ENCODE measurements at regions of chr4 and their contacts with region 1.

Region 1: DNA sequence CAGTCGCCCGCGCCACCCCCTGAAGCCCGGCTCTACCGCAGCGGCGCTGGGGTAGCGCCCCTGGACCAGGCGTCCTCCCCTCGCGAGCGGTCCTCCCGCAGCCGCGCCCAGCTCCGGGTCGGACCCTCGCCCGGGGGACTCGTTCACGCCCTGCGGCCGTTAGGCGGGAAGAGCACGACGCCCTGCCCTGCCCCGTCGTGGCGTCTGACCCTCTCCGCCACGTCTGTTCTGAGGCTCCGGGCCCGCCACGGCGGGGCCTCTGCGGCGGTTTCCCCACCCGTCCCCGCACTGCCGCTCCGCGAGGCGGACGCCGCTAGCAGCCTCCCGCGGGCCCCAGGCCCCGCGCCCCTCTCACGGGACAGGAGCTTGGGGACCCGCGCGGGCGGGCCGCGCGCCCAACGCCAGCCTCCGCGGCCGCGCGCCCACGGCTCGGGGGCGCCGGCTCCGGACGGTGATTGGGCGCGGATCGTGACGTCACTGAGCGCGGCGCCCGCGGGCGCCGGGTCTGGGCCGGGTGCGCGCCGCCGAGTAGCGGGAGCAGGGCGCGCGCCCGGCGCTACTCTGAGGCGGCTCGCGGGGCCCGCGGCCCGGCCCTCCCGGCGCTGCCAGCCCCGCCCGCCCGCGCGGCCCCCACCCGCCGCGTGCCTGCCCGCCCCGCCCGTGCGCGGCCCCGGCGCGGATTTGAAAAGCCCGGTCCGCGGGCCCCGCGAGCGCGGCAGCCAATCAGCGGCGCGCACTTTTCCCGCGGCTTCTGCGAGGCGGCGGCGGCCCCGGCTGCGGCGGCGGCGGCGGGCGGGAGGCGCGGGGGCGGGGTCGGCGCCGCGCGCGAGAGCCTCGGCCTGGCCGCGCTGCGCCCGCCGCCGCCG is at the start of gene NSD2:
- DNase-seq: peak; percentile 96
- ATAC-seq: peak; percentile 60
- H3K4me3 Mint-ChIP-seq: peak within 1 kb of the TSS; percentile 99
- H3K27ac Mint-ChIP-seq: peak within 1 kb of the TSS; percentile 99
- H3K4me1 Mint-ChIP-seq: peaks cover 36% of the 10 kb centered on the region
- H3K27me3 Mint-ChIP-seq: no peaks in the 10 kb centered on the region
- total RNA-seq, gene NSD2: 194 to 232 TPM

Region 2: GRCh38 chr4:931960-932712 is 938.7 kb before region 1 on chr4 and contains the starts of genes GAK and TMEM175:
- CTCF ChIA-PET with region 1: no interaction called
- POLR2A ChIA-PET with region 1: no interaction called
- intact Hi-C with region 1: loop called in 1 of 2 experiments (anchors 1 kb)
- DNase-seq: peak; percentile 98
- ATAC-seq: peak; percentile 95
- H3K4me3 Mint-ChIP-seq: peak within 1 kb of the TSS; percentile 87
- H3K27ac Mint-ChIP-seq: peak within 1 kb of the TSS; percentile 89
- H3K4me1 Mint-ChIP-seq: peaks cover 29% of the 10 kb centered on the region
- H3K27me3 Mint-ChIP-seq: no peaks in the 10 kb centered on the region
- total RNA-seq, gene GAK: 82.9 to 88.0 TPM
- total RNA-seq, gene TMEM175: 15.2 to 17.3 TPM

Region 3: DNA sequence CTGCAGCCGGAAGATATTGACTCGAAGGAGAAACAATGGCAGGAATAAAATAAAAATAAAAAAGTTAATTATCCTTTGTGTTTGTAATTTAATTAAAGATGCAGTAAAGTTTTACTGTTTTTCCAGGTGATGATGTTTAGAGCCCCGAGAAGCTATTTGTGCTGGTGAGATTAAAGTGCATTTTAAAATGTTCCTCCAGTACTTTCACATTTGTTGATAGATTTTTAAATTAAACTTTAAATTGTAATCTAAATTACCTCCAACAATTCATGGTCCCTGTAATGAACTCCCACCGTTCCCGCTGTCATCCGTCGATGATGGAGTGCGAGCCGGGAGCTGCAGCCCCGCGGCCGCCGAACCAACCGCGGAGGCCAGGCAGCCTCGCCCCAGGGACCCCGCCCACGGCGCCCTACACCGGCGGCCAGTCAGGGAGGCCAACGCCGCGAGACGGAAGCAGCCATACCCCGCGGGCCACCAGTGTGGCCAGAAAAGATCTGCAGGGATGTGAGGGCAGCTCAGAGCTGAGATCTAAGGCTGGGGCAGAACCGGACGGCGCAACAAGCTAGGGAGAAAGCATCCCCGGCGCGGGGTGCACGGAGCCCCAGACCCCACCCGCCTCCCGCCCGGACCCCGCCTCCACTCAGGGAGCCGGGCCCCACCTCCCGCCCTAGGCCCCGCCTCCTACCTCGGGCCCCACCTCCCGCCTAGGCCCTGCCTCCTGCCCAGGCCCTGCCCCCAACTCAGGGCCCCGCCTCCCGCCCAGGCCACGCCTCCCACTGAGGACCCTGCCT is 290.7 kb before region 1 on chr4:
- CTCF ChIA-PET with region 1: no interaction called
- POLR2A ChIA-PET with region 1: no interaction called
- intact Hi-C with region 1: loop called in 1 of 2 experiments (anchors 2 kb)
- DNase-seq: peak; percentile 98
- ATAC-seq: peak; percentile 79
- H3K4me3 Mint-ChIP-seq: peak overlapping the region; percentile 60
- H3K27ac Mint-ChIP-seq: no peak overlapping the region
- H3K4me1 Mint-ChIP-seq: peaks cover 4% of the 10 kb centered on the region
- H3K27me3 Mint-ChIP-seq: no peaks in the 10 kb centered on the region

Region 4: GRCh38 chr4:1834047-1834775 is 36.6 kb before region 1 on chr4:
- CTCF ChIA-PET with region 1: no interaction called
- POLR2A ChIA-PET with region 1: no interaction called
- intact Hi-C with region 1: no loop called
- DNase-seq: no peak
- ATAC-seq: no peak
- H3K4me3 Mint-ChIP-seq: no peak overlapping the region
- H3K27ac Mint-ChIP-seq: no peak overlapping the region
- H3K4me1 Mint-ChIP-seq: peaks cover 5% of the 10 kb centered on the region
- H3K27me3 Mint-ChIP-seq: no peaks in the 10 kb centered on the region

Region 5: GRCh38 chr4:1856042-1856788 is 14.6 kb before region 1 on chr4 and contains the start of gene LETM1:
- CTCF ChIA-PET with region 1: interaction called, 3 read pairs
- POLR2A ChIA-PET with region 1: interaction called, 11 read pairs
- intact Hi-C with region 1: loop called (anchors 1 kb)
- DNase-seq: peak; percentile 97
- ATAC-seq: peak; percentile 99
- H3K4me3 Mint-ChIP-seq: peak within 1 kb of the TSS; percentile 78
- H3K27ac Mint-ChIP-seq: peak within 1 kb of the TSS; percentile 55
- H3K4me1 Mint-ChIP-seq: peaks cover 40% of the 10 kb centered on the region
- H3K27me3 Mint-ChIP-seq: no peaks in the 10 kb centered on the region
- total RNA-seq, gene LETM1: 41.6 to 51.3 TPM

Region 6: DNA sequence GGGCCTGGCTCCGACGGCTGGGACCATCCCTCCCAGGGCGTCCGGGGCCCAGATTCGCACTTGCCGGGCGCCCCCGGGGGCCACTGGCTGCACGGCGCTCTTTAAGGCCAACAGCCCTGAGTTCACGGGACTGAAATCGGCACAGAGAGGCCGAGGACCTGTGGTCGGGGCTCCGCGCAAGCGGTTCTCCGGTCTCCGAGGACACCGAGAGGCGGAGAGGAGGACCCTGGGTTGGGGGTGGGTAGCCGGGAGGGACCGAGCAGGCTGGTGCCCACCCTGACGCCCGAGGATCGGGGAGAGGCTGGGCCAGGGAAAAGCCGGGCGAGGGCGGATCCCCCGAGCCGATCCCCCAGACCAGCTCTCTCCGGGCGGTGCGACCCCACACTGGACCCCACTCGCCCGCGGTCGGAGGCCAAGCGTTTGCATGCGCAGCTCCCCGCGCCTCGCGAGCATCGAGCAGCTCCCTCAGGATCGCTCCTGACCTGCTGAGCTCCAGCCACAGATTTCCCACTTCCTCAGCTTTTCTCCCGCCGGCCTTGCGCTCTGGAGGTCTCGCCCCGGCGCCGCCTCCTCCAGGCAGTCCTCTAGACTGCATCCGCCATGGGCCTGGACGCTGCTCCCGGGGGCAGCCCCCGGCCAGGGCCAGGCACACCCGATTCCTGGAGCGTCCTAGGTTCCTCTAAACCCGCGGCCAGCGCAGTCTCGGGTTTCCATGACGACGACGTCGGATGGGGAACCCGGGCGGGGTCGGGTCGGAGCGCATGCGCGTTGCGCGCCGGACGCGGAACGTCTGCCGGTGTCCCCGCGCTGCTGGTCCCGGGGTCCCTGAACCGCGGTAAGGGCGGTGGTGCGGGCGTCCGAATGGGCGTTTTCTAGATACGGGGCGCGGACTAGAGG is 170.7 kb after region 1 on chr4:
- CTCF ChIA-PET with region 1: no interaction called
- POLR2A ChIA-PET with region 1: no interaction called
- intact Hi-C with region 1: loop called in 1 of 2 experiments (anchors 5 kb)
- DNase-seq: peak; percentile 93
- ATAC-seq: peak; percentile 87
- H3K4me3 Mint-ChIP-seq: peak overlapping the region; percentile 70
- H3K27ac Mint-ChIP-seq: no peak overlapping the region
- H3K4me1 Mint-ChIP-seq: no peaks in the 10 kb centered on the region
- H3K27me3 Mint-ChIP-seq: peaks cover 15% of the 10 kb centered on the region

Region 7: GRCh38 chr4:2468445-2469192 is 597.8 kb after region 1 on chr4 and contains the start of gene RNF4:
- CTCF ChIA-PET with region 1: no interaction called
- POLR2A ChIA-PET with region 1: no interaction called
- intact Hi-C with region 1: loop called in 1 of 2 experiments (anchors 1 kb)
- DNase-seq: peak; percentile 98
- ATAC-seq: peak; percentile 86
- H3K4me3 Mint-ChIP-seq: peak within 1 kb of the TSS; percentile 99
- H3K27ac Mint-ChIP-seq: peak within 1 kb of the TSS; percentile 93
- H3K4me1 Mint-ChIP-seq: peaks cover 42% of the 10 kb centered on the region
- H3K27me3 Mint-ChIP-seq: no peaks in the 10 kb centered on the region
- total RNA-seq, gene RNF4: 87.5 to 94.1 TPM

Region 8: GRCh38 chr4:3074078-3074795 is 1203.4 kb after region 1 on chr4 and contains the starts of genes HTT and HTT-AS:
- CTCF ChIA-PET with region 1: no interaction called
- POLR2A ChIA-PET with region 1: no interaction called
- intact Hi-C with region 1: loop called in 1 of 2 experiments (anchors 2 kb)
- DNase-seq: peak; percentile 100
- ATAC-seq: peak; percentile 89
- H3K4me3 Mint-ChIP-seq: peak within 1 kb of the TSS; percentile 95
- H3K27ac Mint-ChIP-seq: peak within 1 kb of the TSS; percentile 90
- H3K4me1 Mint-ChIP-seq: peaks cover 24% of the 10 kb centered on the region
- H3K27me3 Mint-ChIP-seq: no peaks in the 10 kb centered on the region
- total RNA-seq, gene HTT: 80.1 to 127 TPM
- total RNA-seq, gene HTT-AS: not detected

Measured in activated CD4-positive, alpha-beta T cell treated with anti-CD3 and anti-CD28 coated beads for 36 hours (primary cell).